ENCODE measurements at regions of chr17 and their contacts with region 1.

Region 1: DNA sequence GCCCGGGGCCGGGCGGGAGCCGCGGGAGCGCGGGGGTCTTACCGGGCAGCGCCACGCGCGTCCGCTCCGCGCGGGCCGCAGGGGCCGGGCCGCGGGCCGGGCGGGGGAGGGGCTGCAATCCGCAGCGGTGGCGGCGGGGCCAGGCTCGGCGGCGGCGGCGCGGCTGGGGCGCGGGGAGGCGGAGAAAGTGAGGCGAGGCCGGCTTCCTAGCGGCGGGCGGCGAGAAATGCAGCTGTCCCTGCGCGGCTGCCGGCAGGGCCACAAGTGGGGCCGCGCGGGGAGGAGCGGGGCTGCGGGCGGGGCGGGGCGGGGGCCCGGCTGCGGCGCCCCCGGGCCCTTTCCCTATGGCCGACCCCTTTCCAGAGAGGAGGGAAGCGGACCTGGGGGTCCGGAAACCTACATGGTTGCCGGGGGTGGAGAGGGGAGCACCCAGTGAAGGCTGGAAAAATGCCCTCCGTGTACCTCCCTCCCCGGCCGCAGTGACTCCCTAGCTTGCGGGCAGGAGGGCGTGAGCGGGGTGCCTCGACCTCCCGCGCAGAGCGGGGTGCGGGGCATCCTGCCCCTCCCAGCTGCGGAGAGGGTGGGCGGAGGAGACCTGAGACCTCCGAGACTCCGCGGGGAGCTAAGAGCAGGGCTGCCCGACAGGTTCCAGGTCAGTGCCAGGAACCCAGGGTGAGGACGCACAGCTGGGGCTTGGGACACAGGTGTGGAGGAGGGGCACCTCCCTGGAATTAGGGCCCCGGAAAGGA is at the start of gene CUEDC1:
- DNase-seq: peak; percentile 81 to 90
- ATAC-seq: peak; percentile 53 to 80 (median 62)
- H3K4me3 ChIP-seq: peak within 1 kb of the TSS; percentile 74 to 98 (median 84)
- H3K27ac ChIP-seq: peak within 1 kb of the TSS; percentile 97 to 100 (median 99)
- H3K4me1 ChIP-seq: peaks cover 14 to 56% (median 52%) of the 10 kb centered on the region in 9 donors
- H3K27me3 ChIP-seq: peaks cover 0 to 4% (median 0%) of the 10 kb centered on the region in 7 donors
- CTCF ChIP-seq: peak in 8 of 9 donors; percentile 4 to 61 (median 42)
- total RNA-seq, gene CUEDC1: 38.3 to 65.0 (median 47.2) TPM

Region 2: GRCh38 chr17:57911834-57912673 is 43.3 kb before region 1 on chr17:
- intact Hi-C with region 1: loop called in 2 of 10 experiments (anchors 2 to 5 kb)
- DNase-seq: peak; percentile 92 to 96
- ATAC-seq: peak; percentile 86 to 97 (median 93)
- H3K4me3 ChIP-seq: peak overlapping the region in 2 of 10 donors; percentile 16 to 24
- H3K27ac ChIP-seq: peak overlapping the region; percentile 4 to 85 (median 72)
- H3K4me1 ChIP-seq: peaks cover 41 to 79% (median 62%) of the 10 kb centered on the region in 9 donors
- H3K27me3 ChIP-seq: no peaks in the 10 kb centered on the region
- CTCF ChIP-seq: no peak

Region 3: GRCh38 chr17:57916925-57917858 is 38.2 kb before region 1 on chr17:
- intact Hi-C with region 1: loop called in 2 of 10 experiments (anchors 2 to 5 kb)
- DNase-seq: peak; percentile 51 to 59
- ATAC-seq: peak; percentile 46 to 84 (median 62)
- H3K4me3 ChIP-seq: no peak overlapping the region
- H3K27ac ChIP-seq: peak overlapping the region in 9 of 10 donors; percentile 35 to 85 (median 72)
- H3K4me1 ChIP-seq: peaks cover 54 to 96% (median 84%) of the 10 kb centered on the region in 9 donors
- H3K27me3 ChIP-seq: no peaks in the 10 kb centered on the region
- CTCF ChIP-seq: peak in 2 of 9 donors; percentile 26 to 30

Region 4: GRCh38 chr17:57929386-57929785 is 26.0 kb before region 1 on chr17:
- intact Hi-C with region 1: loop called in 1 of 10 experiments (anchors 1 kb)
- DNase-seq: no peak
- ATAC-seq: peak in 3 of 8 donors; percentile 4 to 43 (median 5)
- H3K4me3 ChIP-seq: no peak overlapping the region
- H3K27ac ChIP-seq: peak overlapping the region in 8 of 10 donors; percentile 8 to 69 (median 64)
- H3K4me1 ChIP-seq: peaks cover 29 to 100% (median 82%) of the 10 kb centered on the region in 9 donors
- H3K27me3 ChIP-seq: no peaks in the 10 kb centered on the region
- CTCF ChIP-seq: no peak

Region 5: DNA sequence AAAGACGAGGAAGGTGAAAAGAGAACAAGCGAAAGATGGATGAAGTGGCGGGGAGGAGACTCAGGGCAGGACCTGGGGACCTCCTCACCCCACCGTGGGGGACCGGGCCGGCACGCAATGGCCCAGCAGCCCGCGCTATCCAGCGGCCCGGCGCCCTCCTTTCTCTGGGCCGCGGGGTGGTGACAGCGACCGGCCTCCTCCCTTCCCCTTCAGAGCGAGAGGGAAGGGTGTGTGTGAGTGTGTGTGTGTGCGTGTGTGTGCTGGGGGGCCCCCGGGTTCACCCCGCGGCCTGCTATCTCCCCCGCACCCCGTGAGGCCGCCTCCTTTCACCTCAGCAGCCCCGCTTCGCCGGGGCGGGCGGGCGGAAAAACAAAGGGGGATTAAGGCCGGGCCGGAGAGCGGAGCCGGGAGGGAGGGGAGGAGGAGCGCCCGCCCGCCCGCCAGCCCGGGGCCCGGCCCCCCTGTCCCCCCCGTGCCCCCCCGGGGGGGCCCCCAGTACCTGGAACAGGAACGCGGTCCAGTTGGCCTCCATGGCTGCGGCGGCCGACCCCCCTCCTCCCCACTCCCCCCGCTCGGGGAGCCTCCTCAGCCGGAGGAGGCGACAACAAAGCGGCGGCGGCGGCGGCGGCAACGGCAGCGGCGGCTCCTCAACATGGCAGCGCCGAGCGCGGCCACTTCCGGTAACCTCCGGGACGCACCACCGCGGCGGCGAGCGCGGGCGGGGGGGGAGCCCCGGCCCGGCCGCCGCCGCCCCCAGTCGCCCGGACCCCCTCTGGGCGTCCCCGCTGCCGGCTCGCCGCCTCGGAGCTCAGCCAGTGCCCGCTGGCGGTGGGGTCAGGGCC is 32.4 kb after region 1 on chr17 and contains the start of gene VEZF1:
- intact Hi-C with region 1: loop called in 6 of 10 experiments (anchors 2 to 5 kb)
- DNase-seq: peak; percentile 79 to 85
- ATAC-seq: peak; percentile 67 to 82 (median 75)
- H3K4me3 ChIP-seq: peak within 1 kb of the TSS; percentile 65 to 94 (median 83)
- H3K27ac ChIP-seq: peak within 1 kb of the TSS; percentile 95 to 99 (median 98)
- H3K4me1 ChIP-seq: peaks cover 11 to 80% (median 62%) of the 10 kb centered on the region in 9 donors
- H3K27me3 ChIP-seq: no peaks in the 10 kb centered on the region
- CTCF ChIP-seq: no peak
- total RNA-seq, gene VEZF1: 56.2 to 81.2 (median 61.5) TPM

Measured in heart right ventricle (tissue), 16 donors.